Mammary epithelial cell (primary cell): ENCODE measurements at regions of chr1 and their contacts with region 1.

Region 1: DNA sequence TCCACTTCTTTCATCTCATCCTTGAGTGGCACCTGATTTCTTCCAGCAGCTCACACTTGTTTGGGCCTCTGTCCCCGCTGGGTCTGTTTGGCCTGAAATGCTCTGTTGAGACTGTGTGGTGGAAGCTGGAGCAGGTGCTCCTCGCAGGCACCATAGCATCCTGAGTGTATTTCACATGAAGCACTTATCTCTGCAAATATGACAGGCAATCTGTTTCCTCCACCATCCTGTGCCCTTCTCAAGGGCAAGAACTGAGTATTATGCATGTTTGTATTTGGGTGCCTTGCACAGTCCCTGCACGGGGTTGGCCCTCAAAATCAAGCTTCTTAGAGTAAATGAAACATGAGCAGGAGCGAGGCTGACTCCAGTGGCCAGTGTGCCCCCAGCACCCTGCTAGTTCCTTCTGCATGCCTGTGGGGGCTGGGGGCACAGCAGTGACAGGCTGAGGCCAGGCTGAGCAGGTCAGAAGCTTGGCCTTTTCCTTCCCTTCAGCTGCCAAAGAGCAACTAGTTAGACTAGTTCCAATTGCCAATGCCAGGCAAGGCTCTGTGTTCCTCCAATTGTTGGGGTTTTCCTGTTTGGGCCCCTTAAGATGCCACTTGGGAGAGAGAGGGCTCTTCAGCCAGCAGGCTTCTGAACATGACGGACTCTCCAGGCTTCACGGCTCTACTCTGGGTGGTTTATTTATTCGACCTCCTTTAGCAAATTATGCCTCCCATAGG is 129.6 kb upstream of the ATP1A1 start:
- DNase-seq: no peak
- H3K4me3 ChIP-seq: no peak overlapping the region
- H3K27ac ChIP-seq: no peak overlapping the region
- H3K4me1 ChIP-seq: no peaks in the 10 kb centered on the region
- H3K27me3 ChIP-seq: no peaks in the 10 kb centered on the region
- CTCF ChIP-seq: no peak

Region 2: GRCh38 chr1:116207126-116207735 is 36.3 kb before region 1 on chr1:
- CTCF ChIA-PET with region 1: no interaction called
- dilution Hi-C with region 1: loop called (anchors 5 kb)
- in situ Hi-C with region 1: no loop called
- intact Hi-C with region 1: no loop called
- DNase-seq: no peak
- H3K4me3 ChIP-seq: no peak overlapping the region
- H3K27ac ChIP-seq: no peak overlapping the region
- H3K4me1 ChIP-seq: no peaks in the 10 kb centered on the region
- H3K27me3 ChIP-seq: peaks cover under 1% of the 10 kb centered on the region
- CTCF ChIP-seq: no peak